ENCODE measurements at regions of chr14 and their contacts with region 1.

Region 1: GRCh38 chr14:24310646-24311604 is at the start of gene LTB4R:
- DNase-seq: peak; percentile 53 to 82 (median 67)
- ATAC-seq: peak; percentile 85 to 87
- H3K4me3 Mint-ChIP-seq: peak within 1 kb of the TSS; percentile 77 to 87 (median 82)
- H3K27ac Mint-ChIP-seq: peak within 1 kb of the TSS; percentile 82 to 95 (median 92)
- H3K4me1 Mint-ChIP-seq: peaks cover 41 to 80% (median 73%) of the 10 kb centered on the region in 4 donors
- H3K27me3 Mint-ChIP-seq: no peaks in the 10 kb centered on the region
- polyA plus RNA-seq, gene LTB4R: 3.4 to 5.9 (median 4.5) TPM

Region 2: GRCh38 chr14:24271134-24271833 is 39.6 kb before region 1 on chr14 and contains the start of gene RABGGTA:
- POLR2A ChIA-PET with region 1: interaction called, 15 read pairs
- DNase-seq: peak; percentile 87 to 98 (median 94)
- ATAC-seq: peak; percentile 86 to 91
- H3K4me3 Mint-ChIP-seq: peak within 1 kb of the TSS; percentile 78 to 94 (median 92)
- H3K27ac Mint-ChIP-seq: peak within 1 kb of the TSS; percentile 92 to 100 (median 99)
- H3K4me1 Mint-ChIP-seq: peaks cover 31 to 45% (median 41%) of the 10 kb centered on the region in 4 donors
- H3K27me3 Mint-ChIP-seq: no peaks in the 10 kb centered on the region
- polyA plus RNA-seq, gene RABGGTA: 12.7 to 22.1 (median 20.4) TPM

Region 3: GRCh38 chr14:24299255-24300195 is 11.4 kb before region 1 on chr14 and contains the starts of genes DHRS1 and NOP9:
- POLR2A ChIA-PET with region 1: interaction called, 56 read pairs
- DNase-seq: peak; percentile 85 to 96 (median 92)
- ATAC-seq: peak; percentile 79 to 89
- H3K4me3 Mint-ChIP-seq: peak within 1 kb of the TSS; percentile 90 to 99 (median 94)
- H3K27ac Mint-ChIP-seq: peak within 1 kb of the TSS; percentile 94 to 98 (median 97)
- H3K4me1 Mint-ChIP-seq: peaks cover 29 to 55% (median 51%) of the 10 kb centered on the region in 4 donors
- H3K27me3 Mint-ChIP-seq: no peaks in the 10 kb centered on the region
- polyA plus RNA-seq, gene DHRS1: 19.6 to 22.4 (median 20.8) TPM
- polyA plus RNA-seq, gene NOP9: 1.3 to 2.2 (median 1.6) TPM

Region 4: DNA sequence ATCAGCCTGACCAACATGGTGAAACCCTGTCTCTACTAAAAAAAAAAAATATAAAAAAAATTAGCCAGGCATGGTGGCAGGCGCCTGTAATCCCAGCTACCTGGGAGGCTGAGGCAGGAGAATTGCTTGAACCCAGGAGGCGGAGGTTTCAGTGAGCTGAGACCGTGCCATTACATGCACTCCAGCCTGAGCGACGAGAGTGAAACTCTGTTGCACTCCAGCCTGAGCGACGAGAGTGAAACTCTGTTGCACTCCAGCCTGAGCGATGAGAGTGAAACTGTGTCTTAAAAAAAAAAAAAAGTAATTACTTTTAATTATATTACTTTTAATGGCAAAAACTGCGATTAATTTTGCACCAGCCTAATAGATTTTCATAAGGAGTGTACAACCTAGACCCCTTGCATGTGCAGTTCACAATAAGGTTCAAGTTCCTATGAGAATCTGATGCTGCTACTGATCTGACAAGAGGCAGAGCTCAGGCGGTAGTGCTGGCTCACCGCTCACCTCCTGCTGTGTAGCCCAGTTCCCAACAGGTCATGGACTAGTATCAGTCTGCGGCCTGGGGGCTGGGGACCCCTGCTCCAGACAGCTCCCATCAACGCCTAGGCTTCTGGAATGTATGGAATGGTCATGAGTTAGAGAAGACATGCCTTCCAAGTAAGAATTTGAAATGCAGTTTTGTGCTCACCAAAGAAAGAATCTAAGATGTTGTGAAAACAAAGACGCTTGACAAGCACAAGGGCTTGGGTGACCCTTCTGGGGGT is 10.5 kb after region 1 on chr14:
- POLR2A ChIA-PET with region 1: interaction called, 10 read pairs
- DNase-seq: no peak
- ATAC-seq: no peak
- H3K4me3 Mint-ChIP-seq: no peak overlapping the region
- H3K27ac Mint-ChIP-seq: peak overlapping the region in 1 of 10 donors; percentile 46
- H3K4me1 Mint-ChIP-seq: peaks cover 0 to 10% (median 2%) of the 10 kb centered on the region in 4 donors
- H3K27me3 Mint-ChIP-seq: peaks cover 0 to 19% (median 2%) of the 10 kb centered on the region in 5 donors

Region 5: DNA sequence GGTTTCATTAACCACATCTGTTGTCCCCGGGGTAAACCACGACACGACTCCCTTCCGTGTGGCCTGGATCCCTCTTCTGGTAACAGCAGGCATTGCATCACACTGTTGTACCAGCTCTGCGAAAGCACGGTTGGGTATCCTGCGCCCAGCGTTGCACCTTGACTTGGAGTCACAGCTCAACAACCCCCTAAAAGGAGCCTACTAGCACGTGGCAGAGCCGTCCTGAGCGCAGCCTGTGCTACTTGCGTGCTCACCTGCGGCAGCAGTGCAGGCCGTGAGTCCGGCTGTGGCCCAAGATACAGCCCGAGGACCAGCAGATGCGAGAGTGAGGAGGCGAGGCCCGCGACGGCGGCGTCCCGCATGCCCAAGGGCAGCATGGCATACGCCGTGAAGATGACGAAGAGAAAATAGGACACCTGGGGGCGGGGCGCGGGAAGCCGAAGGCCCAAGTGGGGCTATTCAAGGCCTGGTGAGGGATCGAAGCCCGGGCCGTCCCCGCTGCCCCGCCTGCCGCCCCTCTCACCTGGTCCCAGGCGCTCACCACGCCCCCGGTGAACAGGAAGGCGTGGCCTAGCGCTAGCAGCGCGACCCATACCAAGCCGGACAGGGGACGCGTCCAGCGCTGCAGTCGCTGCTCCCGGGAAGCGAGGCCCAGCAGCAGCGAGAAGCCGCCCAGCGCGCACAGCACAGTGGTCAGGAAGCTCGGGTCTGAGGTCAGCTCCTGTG is 21.5 kb after region 1 on chr14:
- POLR2A ChIA-PET with region 1: interaction called, 17 read pairs
- DNase-seq: peak; percentile 57 to 93 (median 88)
- ATAC-seq: peak; percentile 86 to 92
- H3K4me3 Mint-ChIP-seq: peak overlapping the region; percentile 72 to 93 (median 84)
- H3K27ac Mint-ChIP-seq: peak overlapping the region; percentile 4 to 94 (median 67)
- H3K4me1 Mint-ChIP-seq: peaks cover 19 to 75% (median 55%) of the 10 kb centered on the region in 4 donors
- H3K27me3 Mint-ChIP-seq: peaks cover 15 to 59% (median 22%) of the 10 kb centered on the region in 5 donors

Measured in naive thymus-derived CD8-positive, alpha-beta T cell (primary cell).